ENCODE measurements at regions of chr3 and their contacts with region 1.

Region 1: GRCh38 chr3:50611464-50612233 is at the start of gene CISH:
- DNase-seq: peak; percentile 89
- H3K4me3 Mint-ChIP-seq: peak within 1 kb of the TSS; percentile 74
- H3K27ac Mint-ChIP-seq: peak within 1 kb of the TSS; percentile 24
- H3K4me1 Mint-ChIP-seq: peaks cover 28% of the 10 kb centered on the region
- H3K27me3 Mint-ChIP-seq: peaks cover 13% of the 10 kb centered on the region
- CTCF ChIP-seq: peak; percentile 28
- total RNA-seq, gene CISH: 1.4 and 1.6 TPM in 2 replicates

Region 2: DNA sequence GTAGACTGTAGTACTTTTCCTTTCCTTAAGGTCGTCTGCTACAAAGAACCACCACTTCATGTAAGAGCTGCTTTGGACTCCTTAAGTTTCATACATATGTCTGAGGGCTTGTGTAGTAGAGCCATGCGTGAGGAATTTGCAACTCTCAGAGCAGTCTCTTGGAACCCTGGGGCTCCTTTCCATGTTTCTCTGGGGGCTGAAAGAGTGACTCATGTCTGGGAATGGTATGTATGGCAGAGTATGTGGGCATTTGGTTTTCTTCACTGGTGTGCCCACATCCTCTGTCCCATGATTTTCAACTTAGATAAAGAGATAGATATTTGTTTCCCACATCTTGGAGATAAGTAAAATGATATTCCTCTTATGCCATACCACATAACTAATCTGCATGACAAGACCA is 543.5 kb before region 1 on chr3:
- CTCF ChIA-PET with region 1: no interaction called
- intact Hi-C with region 1: no loop called
- DNase-seq: no peak
- H3K4me3 Mint-ChIP-seq: no peak overlapping the region
- H3K27ac Mint-ChIP-seq: no peak overlapping the region
- H3K4me1 Mint-ChIP-seq: no peaks in the 10 kb centered on the region
- H3K27me3 Mint-ChIP-seq: no peaks in the 10 kb centered on the region
- CTCF ChIP-seq: no peak

Region 3: DNA sequence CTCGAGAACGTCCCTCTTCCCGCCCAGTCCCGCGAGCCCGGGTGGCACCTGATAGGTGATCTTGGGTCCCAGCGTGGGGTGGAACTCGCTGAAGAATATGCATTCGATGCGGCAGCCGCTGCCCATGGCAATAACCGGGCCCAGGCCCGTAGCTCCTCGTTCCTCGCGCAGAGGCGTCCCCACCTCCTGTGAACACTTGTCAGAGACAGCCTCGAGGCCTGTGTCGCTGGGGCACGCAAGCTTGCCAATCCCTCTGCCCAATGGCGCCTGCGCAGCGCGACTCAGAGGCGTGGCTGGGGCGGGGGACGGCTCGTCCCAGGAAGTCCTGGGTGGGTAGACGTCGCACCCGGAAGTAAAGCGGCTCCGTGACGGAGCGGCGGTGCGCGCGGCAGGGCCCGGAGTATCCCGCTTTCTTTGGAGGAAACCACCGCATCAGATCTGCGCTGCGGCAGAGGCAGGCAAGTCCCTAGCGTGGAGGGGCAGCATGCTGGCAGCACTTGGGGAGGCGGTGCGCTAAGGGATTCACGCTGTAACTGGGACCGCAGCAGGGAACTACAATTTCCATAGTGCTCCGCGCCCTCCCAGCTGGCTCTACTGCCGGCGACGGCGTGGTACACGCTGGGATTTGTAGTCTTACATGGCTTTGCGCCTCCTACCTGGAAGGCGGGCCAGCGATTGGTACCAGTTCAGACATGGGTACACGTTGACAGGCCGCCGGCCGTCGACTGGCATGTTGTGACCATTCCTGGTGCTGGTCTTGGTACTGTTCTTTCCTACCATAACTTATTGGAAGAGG is 260.9 kb before region 1 on chr3 and contains the starts of genes CYB561D2 and NPRL2:
- CTCF ChIA-PET with region 1: no interaction called
- intact Hi-C with region 1: loop called (anchors 5 kb)
- DNase-seq: peak; percentile 95
- H3K4me3 Mint-ChIP-seq: peak within 1 kb of the TSS; percentile 84
- H3K27ac Mint-ChIP-seq: peak within 1 kb of the TSS; percentile 13
- H3K4me1 Mint-ChIP-seq: peaks cover 16% of the 10 kb centered on the region
- H3K27me3 Mint-ChIP-seq: no peaks in the 10 kb centered on the region
- CTCF ChIP-seq: no peak
- total RNA-seq, gene CYB561D2: 19.4 and 19.7 TPM in 2 replicates
- total RNA-seq, gene NPRL2: 21.0 and 21.8 TPM in 2 replicates

Region 4: GRCh38 chr3:50568947-50569749 is 42.5 kb before region 1 on chr3 and contains the start of gene HEMK1:
- CTCF ChIA-PET with region 1: interaction called, 14 read pairs
- intact Hi-C with region 1: loop called (anchors 1 kb)
- DNase-seq: peak; percentile 98
- H3K4me3 Mint-ChIP-seq: peak within 1 kb of the TSS; percentile 86
- H3K27ac Mint-ChIP-seq: peak within 1 kb of the TSS; percentile 58
- H3K4me1 Mint-ChIP-seq: peaks cover 18% of the 10 kb centered on the region
- H3K27me3 Mint-ChIP-seq: peaks cover 37% of the 10 kb centered on the region
- CTCF ChIP-seq: no peak
- total RNA-seq, gene HEMK1: 17.6 and 20.0 TPM in 2 replicates

Region 5: GRCh38 chr3:50652709-50653108 is 41.1 kb after region 1 on chr3:
- CTCF ChIA-PET with region 1: interaction called, 56 read pairs
- intact Hi-C with region 1: loop called (anchors 1 kb)
- DNase-seq: peak; percentile 78
- H3K4me3 Mint-ChIP-seq: no peak overlapping the region
- H3K27ac Mint-ChIP-seq: no peak overlapping the region
- H3K4me1 Mint-ChIP-seq: no peaks in the 10 kb centered on the region
- H3K27me3 Mint-ChIP-seq: peaks cover 3% of the 10 kb centered on the region
- CTCF ChIP-seq: peak; percentile 76

Region 6: DNA sequence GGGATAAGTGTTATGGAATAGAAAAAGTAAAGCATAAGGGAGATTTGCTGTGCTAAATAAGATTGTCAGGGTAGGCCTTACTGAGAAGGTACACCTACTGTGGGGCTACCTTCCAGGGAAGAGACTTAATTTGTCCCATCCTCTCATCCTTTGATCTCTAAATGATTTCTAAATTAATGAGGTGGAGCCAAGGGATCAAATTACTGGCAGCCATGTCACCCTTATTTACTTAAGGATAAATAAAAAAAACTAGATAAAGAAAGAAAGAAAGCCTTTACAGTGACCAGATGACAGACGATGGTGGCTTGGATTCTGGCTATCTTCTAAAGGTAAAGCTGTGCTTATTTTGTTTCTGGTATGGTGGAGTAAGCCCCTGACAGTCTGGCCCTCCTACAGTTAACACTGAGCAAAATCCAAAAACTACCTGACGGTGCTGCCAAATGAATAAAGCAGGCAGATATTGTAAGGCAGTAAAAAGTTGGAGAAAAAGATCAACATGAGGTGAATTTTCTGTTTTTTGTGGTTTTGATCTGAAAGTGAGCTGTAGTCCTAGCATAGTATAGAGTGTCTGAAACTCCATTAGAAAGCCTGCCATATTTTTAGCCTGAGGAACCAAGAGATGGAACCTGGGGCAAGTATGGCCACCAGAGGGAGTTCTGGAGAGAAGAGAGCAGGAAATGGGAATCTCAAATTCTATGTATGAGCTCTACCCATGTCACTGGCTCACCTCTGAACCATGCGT is 488.3 kb after region 1 on chr3:
- CTCF ChIA-PET with region 1: interaction called, 8 read pairs
- intact Hi-C with region 1: loop called (anchors 2 kb)
- DNase-seq: peak; percentile 74
- H3K4me3 Mint-ChIP-seq: no peak overlapping the region
- H3K27ac Mint-ChIP-seq: no peak overlapping the region
- H3K4me1 Mint-ChIP-seq: no peaks in the 10 kb centered on the region
- H3K27me3 Mint-ChIP-seq: peaks cover 53% of the 10 kb centered on the region
- CTCF ChIP-seq: peak; percentile 54

Region 7: DNA sequence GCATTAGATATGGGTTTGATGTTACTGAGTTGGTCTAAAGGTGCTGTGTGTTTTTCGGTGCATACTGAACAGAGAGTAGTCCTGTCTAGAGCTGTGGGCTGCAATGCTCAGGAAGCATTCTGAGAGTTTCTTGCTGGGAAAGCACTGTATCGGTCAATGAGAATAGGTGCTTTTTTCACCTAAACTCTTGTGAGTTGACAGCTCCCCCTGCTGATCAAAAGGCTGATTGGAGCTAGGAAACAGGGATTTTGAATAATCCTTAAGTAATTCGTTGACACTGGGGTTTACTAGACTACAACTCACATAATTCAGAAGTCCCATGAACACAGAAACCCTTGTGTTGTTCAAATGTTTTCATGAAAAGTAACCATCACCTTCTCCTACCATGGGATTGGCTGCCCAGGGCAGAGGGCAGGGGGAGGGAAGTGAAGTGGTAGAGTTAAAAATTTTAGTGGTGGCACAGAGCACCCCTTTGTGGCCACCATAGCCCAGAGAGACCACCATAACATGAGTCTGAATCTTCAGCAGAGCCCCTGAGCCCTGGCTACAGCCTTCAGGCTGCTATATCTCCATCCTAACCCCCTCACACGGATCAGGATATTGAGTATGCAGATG is 760.4 kb after region 1 on chr3:
- CTCF ChIA-PET with region 1: interaction called, 6 read pairs
- intact Hi-C with region 1: loop called (anchors 1 kb)
- DNase-seq: peak; percentile 71
- H3K4me3 Mint-ChIP-seq: no peak overlapping the region
- H3K27ac Mint-ChIP-seq: no peak overlapping the region
- H3K4me1 Mint-ChIP-seq: no peaks in the 10 kb centered on the region
- H3K27me3 Mint-ChIP-seq: peaks cover 83% of the 10 kb centered on the region
- CTCF ChIP-seq: no peak